CD8-positive, alpha-beta T cell (primary cell): ENCODE measurements at regions of chr19 and their contacts with region 1.

Region 1: DNA sequence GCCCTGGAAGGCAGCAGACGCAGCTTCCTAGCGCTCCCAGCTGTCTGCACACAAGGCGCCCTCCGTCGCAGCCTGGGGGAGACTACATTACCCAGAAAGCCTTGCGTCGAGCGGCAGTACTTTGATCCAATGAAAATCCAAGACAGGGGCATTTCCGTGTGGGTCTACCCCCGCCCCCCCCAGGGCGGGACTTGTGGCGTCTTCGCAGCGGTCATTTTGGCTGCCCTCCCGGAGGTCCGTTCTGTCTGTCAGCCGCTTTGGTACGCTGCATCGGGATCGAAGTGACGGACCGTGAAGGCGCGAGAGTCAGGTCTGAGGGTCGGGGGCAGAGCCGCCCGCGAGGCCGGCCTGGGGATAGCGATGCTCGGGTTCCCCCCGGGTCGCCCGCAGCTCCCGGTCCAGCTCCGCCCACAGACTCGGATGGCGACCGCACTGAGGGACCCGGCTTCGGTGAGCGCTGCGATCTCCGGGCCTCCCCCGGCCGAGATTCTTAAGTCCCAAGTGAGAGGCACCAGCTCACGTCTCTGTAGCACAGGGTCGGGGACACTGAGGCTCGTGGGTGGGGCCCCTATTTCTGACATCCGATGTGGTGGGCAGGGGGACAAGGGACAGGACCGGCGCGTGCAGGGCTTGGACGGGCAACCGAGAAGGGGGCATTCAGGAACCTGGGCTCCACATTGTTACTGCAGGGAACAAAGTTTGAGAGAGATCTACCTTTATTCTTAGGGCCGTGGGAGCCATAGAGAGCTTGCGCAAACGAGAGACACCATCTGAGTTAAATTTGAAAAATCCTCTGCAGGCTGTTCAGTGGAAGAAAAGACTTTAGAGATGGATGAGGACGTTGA is at the start of gene ZNF211:
- DNase-seq: peak; percentile 70 to 95 (median 89)
- ATAC-seq: peak; percentile 100
- H3K4me3 ChIP-seq: peak within 1 kb of the TSS; percentile 81 to 82
- H3K4me3 Mint-ChIP-seq: peak within 1 kb of the TSS; percentile 96
- H3K27ac ChIP-seq: peak within 1 kb of the TSS; percentile 60 to 78
- H3K27ac Mint-ChIP-seq: peak within 1 kb of the TSS; percentile 94
- H3K4me1 ChIP-seq: peaks cover 13% of the 10 kb centered on the region
- H3K4me1 Mint-ChIP-seq: peaks cover 29% of the 10 kb centered on the region
- H3K27me3 ChIP-seq: no peaks in the 10 kb centered on the region
- H3K27me3 Mint-ChIP-seq: no peaks in the 10 kb centered on the region
- CTCF ChIP-seq: no peak
- total RNA-seq, gene ZNF211: 34.4 to 35.5 TPM

Region 2: GRCh38 chr19:57362997-57363705 is 270.1 kb before region 1 on chr19 and contains the starts of genes TRAPPC2B and ZNF547:
- CTCF ChIA-PET with region 1: no interaction called
- POLR2A ChIA-PET with region 1: no interaction called
- intact Hi-C with region 1: loop called in 1 of 2 experiments (anchors 1 kb)
- DNase-seq: peak; percentile 96 to 99 (median 99)
- ATAC-seq: peak; percentile 89
- H3K4me3 ChIP-seq: peak within 1 kb of the TSS; percentile 63 to 66
- H3K4me3 Mint-ChIP-seq: peak within 1 kb of the TSS; percentile 86
- H3K27ac ChIP-seq: peak within 1 kb of the TSS; percentile 81 to 95
- H3K27ac Mint-ChIP-seq: peak within 1 kb of the TSS; percentile 98
- H3K4me1 ChIP-seq: peaks cover 12% of the 10 kb centered on the region
- H3K4me1 Mint-ChIP-seq: peaks cover 18% of the 10 kb centered on the region
- H3K27me3 ChIP-seq: no peaks in the 10 kb centered on the region
- H3K27me3 Mint-ChIP-seq: no peaks in the 10 kb centered on the region
- CTCF ChIP-seq: no peak
- total RNA-seq, gene TRAPPC2B: 8.6 to 9.9 TPM
- total RNA-seq, gene ZNF547: 0.72 to 0.81 TPM

Region 3: DNA sequence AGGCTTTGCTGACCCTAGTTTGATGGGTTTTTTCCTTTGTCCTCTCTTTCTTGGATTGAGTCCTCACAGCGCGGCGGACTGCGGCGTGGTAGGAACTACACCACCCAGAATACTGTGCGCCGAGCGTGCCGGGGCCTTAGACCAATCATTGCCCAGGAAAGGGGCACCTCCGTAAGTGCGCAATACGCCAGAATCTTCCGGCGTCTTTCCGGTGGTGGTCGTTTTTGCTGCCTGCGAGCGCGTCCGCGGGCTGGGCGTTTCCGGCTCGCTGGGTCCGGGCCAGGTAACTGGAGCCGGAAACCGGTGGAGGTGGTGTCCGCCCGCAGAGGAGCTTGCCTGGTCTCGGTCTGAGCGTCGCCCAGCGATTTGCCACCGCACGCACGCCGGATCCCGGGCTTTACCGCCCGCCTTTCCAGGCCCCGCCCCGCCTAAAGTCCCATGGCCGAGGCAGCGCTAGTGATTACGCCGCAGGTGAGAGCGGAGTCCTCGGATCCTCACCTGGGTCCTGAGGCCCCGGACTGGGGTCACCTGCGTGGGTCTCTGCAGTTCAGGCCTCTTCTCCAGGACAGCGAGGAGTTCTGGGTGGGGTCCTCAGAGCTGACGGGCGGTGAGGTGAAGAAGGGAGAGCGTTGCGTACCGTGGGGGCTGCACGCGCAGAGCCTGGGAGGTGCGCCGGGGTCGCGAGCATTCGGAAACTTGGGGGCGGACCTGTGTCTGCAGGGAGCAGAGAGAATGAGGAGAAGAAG is 105.9 kb before region 1 on chr19 and contains the start of gene ZNF549:
- CTCF ChIA-PET with region 1: no interaction called
- POLR2A ChIA-PET with region 1: no interaction called
- intact Hi-C with region 1: loop called (anchors 1 kb)
- DNase-seq: peak; percentile 77 to 95 (median 89)
- ATAC-seq: peak; percentile 98
- H3K4me3 ChIP-seq: peak within 1 kb of the TSS; percentile 97
- H3K4me3 Mint-ChIP-seq: peak within 1 kb of the TSS; percentile 94
- H3K27ac ChIP-seq: peak within 1 kb of the TSS; percentile 80 to 88
- H3K27ac Mint-ChIP-seq: peak within 1 kb of the TSS; percentile 96
- H3K4me1 ChIP-seq: peaks cover 16% of the 10 kb centered on the region
- H3K4me1 Mint-ChIP-seq: peaks cover 32% of the 10 kb centered on the region
- H3K27me3 ChIP-seq: no peaks in the 10 kb centered on the region
- H3K27me3 Mint-ChIP-seq: no peaks in the 10 kb centered on the region
- CTCF ChIP-seq: no peak
- total RNA-seq, gene ZNF549: 14.6 to 17.1 TPM

Region 4: GRCh38 chr19:57599761-57600383 is 33.3 kb before region 1 on chr19 and contains the start of gene ZNF530:
- CTCF ChIA-PET with region 1: no interaction called
- POLR2A ChIA-PET with region 1: no interaction called
- intact Hi-C with region 1: loop called (anchors 5 kb)
- DNase-seq: peak; percentile 61 to 93 (median 88)
- ATAC-seq: peak; percentile 86
- H3K4me3 ChIP-seq: peak within 1 kb of the TSS; percentile 67 to 81
- H3K4me3 Mint-ChIP-seq: peak within 1 kb of the TSS; percentile 88
- H3K27ac ChIP-seq: peak within 1 kb of the TSS; percentile 16 to 51
- H3K27ac Mint-ChIP-seq: peak within 1 kb of the TSS; percentile 33
- H3K4me1 ChIP-seq: peaks cover 13% of the 10 kb centered on the region
- H3K4me1 Mint-ChIP-seq: peaks cover 25% of the 10 kb centered on the region
- H3K27me3 ChIP-seq: no peaks in the 10 kb centered on the region
- H3K27me3 Mint-ChIP-seq: no peaks in the 10 kb centered on the region
- CTCF ChIP-seq: no peak
- total RNA-seq, gene ZNF530: 3.6 to 4.2 TPM

Region 5: GRCh38 chr19:57719901-57720519 is 86.8 kb after region 1 on chr19:
- CTCF ChIA-PET with region 1: no interaction called
- POLR2A ChIA-PET with region 1: no interaction called
- intact Hi-C with region 1: loop called in 1 of 2 experiments (anchors 10 kb)
- DNase-seq: peak in 1 of 9 experiments; percentile 23
- ATAC-seq: no peak
- H3K4me3 ChIP-seq: peak overlapping the region in 1 of 2 experiments; percentile 8
- H3K4me3 Mint-ChIP-seq: no peak overlapping the region
- H3K27ac ChIP-seq: no peak overlapping the region
- H3K27ac Mint-ChIP-seq: no peak overlapping the region
- H3K4me1 ChIP-seq: no peaks in the 10 kb centered on the region
- H3K4me1 Mint-ChIP-seq: peaks cover 14% of the 10 kb centered on the region
- H3K27me3 ChIP-seq: no peaks in the 10 kb centered on the region
- H3K27me3 Mint-ChIP-seq: no peaks in the 10 kb centered on the region
- CTCF ChIP-seq: no peak